Esophagus squamous epithelium (tissue), 5 donors: ENCODE measurements at regions of chr9 and their contacts with region 1.

Region 1: GRCh38 chr9:3177936-3178335 is 334.0 kb upstream of the PUM3 start:
- DNase-seq: no peak
- H3K4me3 ChIP-seq: no peak overlapping the region
- H3K27ac ChIP-seq: no peak overlapping the region
- H3K4me1 ChIP-seq: peaks cover 6 to 12% (median 7%) of the 10 kb centered on the region in 3 donors
- H3K27me3 ChIP-seq: peaks cover 0 to 33% (median 3%) of the 10 kb centered on the region in 4 donors
- CTCF ChIP-seq: no peak
- POLR2A ChIP-seq: no peak

Region 2: DNA sequence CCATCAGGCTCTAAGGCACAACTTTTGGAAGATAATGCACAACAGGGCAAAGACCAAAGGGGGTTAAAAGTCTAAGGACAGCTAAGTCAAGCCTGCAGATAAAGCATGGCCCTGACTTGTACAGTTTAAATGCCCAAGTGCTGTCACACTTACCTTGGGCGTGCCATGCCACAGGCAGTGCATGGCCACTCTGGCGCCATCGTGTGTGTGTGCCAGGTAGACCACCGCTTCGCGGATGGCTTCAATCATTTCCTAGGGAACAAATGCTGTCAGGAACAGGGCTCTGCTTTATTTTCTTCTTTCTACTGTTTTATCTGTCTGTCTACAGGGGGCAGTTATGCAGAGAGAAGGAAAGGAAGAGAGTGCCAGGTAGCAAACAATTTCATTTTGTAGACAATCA is 353.4 kb before region 1 on chr9:
- intact Hi-C with region 1: no loop called
- DNase-seq: no peak
- H3K4me3 ChIP-seq: no peak overlapping the region
- H3K27ac ChIP-seq: no peak overlapping the region
- H3K4me1 ChIP-seq: no peaks in the 10 kb centered on the region
- H3K27me3 ChIP-seq: no peaks in the 10 kb centered on the region
- CTCF ChIP-seq: peak in 1 of 6 experiments; percentile 31
- POLR2A ChIP-seq: no peak

Region 3: DNA sequence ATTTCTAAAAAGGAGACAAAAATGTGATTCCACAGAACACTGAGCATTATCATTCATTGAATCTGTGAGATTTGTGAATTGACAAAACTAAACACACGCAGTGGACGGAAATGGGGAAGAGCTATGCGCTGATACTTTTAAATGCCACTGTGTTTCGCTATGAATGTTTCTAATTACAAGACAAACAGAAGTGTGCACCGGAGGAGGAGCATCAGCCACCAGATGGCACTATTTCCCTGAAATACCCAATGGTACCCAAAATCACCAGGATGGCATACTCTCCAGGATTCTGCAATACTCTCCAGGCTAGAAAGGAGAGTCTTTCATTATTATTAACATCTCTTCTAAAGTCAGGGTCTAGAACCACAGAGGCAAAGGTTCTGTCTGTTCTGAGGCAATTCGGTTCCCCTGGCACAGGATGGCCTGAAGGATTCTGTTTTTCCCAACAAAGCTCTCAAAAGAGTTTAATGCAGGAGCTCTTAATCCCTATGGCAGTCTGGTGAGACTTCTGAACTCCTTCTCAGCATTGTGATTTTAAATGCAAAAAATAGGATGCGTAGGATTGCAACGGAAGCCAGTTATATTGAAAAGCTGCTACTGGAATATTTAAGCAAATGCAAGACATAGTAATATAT is 320.3 kb before region 1 on chr9:
- intact Hi-C with region 1: loop called (anchors 5 kb)
- DNase-seq: peak; percentile 1
- H3K4me3 ChIP-seq: no peak overlapping the region
- H3K27ac ChIP-seq: no peak overlapping the region
- H3K4me1 ChIP-seq: no peaks in the 10 kb centered on the region
- H3K27me3 ChIP-seq: peaks cover 0 to 20% (median 0%) of the 10 kb centered on the region in 4 donors
- CTCF ChIP-seq: peak; percentile 50 to 85 (median 72)
- POLR2A ChIP-seq: no peak